GM12878 (cell line): ENCODE measurements at regions of chr14 and their contacts with region 1.

Region 1: GRCh38 chr14:25006961-25007795 is 42.8 kb downstream of the STXBP6 start:
- DNase-seq: no peak
- ATAC-seq: peak; percentile 70
- H3K4me3 ChIP-seq: no peak overlapping the region
- H3K27ac ChIP-seq: no peak overlapping the region
- H3K4me1 ChIP-seq: no peaks in the 10 kb centered on the region
- H3K27me3 ChIP-seq: no peaks in the 10 kb centered on the region
- CTCF ChIP-seq: no peak
- EP300 ChIP-seq: peak; percentile 56 to 84; a peak in 3 of 4 replicates
- POLR2A ChIP-seq: no peak
- RAD21 ChIP-seq: no peak

Region 2: DNA sequence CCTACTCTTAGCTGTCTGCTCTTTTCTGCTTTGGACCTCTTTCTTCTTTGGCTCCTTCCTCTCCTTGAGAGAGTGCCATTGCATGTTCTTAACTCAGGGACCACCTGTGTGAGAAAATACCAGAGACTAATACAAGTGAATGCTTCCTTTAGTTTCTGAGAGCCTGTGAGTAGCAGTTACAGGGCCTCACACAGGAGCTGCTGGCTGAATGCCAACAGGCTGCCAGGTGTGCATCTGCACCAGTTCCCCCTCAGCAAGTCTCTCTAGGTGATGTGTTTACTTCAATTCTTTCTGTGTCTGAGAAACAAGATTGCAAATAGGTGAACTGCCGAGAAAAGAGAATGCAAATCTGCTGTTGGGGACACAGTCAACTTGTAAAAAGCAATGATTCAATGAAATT is 65.5 kb before region 1 on chr14:
- CTCF ChIA-PET with region 1: no interaction called
- POLR2A ChIA-PET with region 1: no interaction called
- RAD21 ChIA-PET with region 1: interaction called, 4 read pairs
- SMC1A ChIA-PET with region 1: interaction called, 5 read pairs
- in situ Hi-C with region 1: no loop called
- intact Hi-C with region 1: loop called (anchors 1 kb)
- DNase-seq: no peak
- ATAC-seq: peak; percentile 36
- H3K4me3 ChIP-seq: no peak overlapping the region
- H3K27ac ChIP-seq: peak overlapping the region; percentile 30; the same call in 1 of the 2 replicates
- H3K4me1 ChIP-seq: no peaks in the 10 kb centered on the region; the same call in none of the 2 replicates
- H3K27me3 ChIP-seq: no peaks in the 10 kb centered on the region
- CTCF ChIP-seq: no peak
- EP300 ChIP-seq: no peak
- POLR2A ChIP-seq: no peak
- RAD21 ChIP-seq: no peak

Region 3: DNA sequence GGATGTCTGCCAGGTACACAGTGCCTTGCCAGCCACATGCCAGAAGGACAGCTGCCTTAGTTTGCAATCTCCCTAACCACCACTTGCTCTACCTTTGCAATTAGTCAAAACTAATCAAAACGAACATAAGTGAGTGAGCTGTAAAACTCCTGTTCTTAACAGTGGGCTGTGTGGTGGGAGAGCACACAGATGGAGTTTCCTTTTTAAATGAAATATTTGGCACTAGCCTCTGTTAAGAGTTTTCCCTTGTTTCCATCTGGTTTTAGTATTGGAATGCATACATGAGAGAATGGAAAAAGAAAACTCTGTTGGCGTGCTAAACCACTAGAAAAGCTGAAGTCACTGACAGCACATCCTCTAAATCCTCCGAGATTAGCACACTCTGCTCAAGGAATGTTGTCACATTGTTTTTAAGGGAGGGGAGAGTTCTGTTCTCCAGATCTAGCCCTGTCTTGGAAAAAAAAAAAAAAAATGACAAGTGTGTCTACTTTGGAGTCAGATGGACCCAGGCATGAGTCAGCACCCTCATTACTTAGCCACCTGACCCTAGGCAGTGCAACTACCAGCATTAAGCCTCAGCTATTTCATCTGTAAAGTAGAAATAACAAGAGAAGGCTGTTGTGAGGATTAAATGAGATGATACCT is 41.1 kb before region 1 on chr14:
- CTCF ChIA-PET with region 1: interaction called, 3 read pairs
- POLR2A ChIA-PET with region 1: interaction called, 3 read pairs
- RAD21 ChIA-PET with region 1: interaction called, 6 read pairs
- SMC1A ChIA-PET with region 1: interaction called, 10 read pairs
- in situ Hi-C with region 1: no loop called
- intact Hi-C with region 1: no loop called
- DNase-seq: no peak
- ATAC-seq: peak; percentile 69
- H3K4me3 ChIP-seq: no peak overlapping the region
- H3K27ac ChIP-seq: no peak overlapping the region
- H3K4me1 ChIP-seq: no peaks in the 10 kb centered on the region
- H3K27me3 ChIP-seq: no peaks in the 10 kb centered on the region
- CTCF ChIP-seq: no peak
- EP300 ChIP-seq: 0 out of 4 replicates have a peak, but pooled peaks of 1 of the 2 experiments have one; percentile 9
- POLR2A ChIP-seq: no peak
- RAD21 ChIP-seq: no peak

Region 4: GRCh38 chr14:24984846-24985589 is 22.2 kb before region 1 on chr14:
- CTCF ChIA-PET with region 1: interaction called, 11 read pairs
- POLR2A ChIA-PET with region 1: no interaction called
- RAD21 ChIA-PET with region 1: interaction called, 32 read pairs
- SMC1A ChIA-PET with region 1: interaction called, 118 read pairs
- in situ Hi-C with region 1: no loop called
- intact Hi-C with region 1: no loop called
- DNase-seq: no peak
- ATAC-seq: no peak
- H3K4me3 ChIP-seq: no peak overlapping the region
- H3K27ac ChIP-seq: no peak overlapping the region
- H3K4me1 ChIP-seq: no peaks in the 10 kb centered on the region
- H3K27me3 ChIP-seq: no peaks in the 10 kb centered on the region
- CTCF ChIP-seq: no peak
- EP300 ChIP-seq: no peak
- POLR2A ChIP-seq: no peak
- RAD21 ChIP-seq: no peak

Region 5: DNA sequence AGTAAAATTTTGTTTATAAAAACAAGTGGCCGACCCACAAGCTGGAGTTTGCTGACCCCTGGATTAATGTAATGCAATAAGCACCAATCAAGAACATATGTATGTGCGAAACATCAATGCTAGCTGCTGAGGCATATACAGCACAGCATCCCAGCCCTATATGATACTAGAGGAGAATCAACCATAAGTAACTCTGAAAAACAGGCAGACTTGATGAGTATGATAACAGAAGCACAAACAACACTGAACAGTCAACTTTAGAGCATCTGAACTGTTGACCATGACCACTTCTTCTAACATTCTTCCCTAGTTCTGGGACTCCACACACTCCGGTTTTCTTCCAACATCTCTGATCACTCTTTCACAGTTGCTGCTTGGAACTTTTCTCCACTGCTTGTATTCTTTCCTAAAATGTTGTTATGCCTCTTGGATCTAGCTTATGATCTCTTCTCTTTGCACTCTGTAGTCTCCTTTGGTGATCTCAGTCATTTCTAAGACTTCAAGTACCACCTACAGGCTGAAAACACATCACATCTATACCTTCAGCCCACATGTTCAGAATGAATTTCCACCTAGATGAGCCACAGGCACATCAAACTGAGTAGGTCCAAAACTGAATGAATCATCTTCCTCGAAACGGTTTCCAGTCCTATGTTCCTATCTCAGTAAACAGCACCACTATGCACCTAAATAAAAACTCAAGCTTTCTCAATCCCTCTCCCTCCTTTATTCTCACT is 14.4 kb before region 1 on chr14:
- CTCF ChIA-PET with region 1: interaction called, 12 read pairs
- POLR2A ChIA-PET with region 1: interaction called, 6 read pairs
- RAD21 ChIA-PET with region 1: interaction called, 5 read pairs
- SMC1A ChIA-PET with region 1: interaction called, 116 read pairs
- in situ Hi-C with region 1: no loop called
- intact Hi-C with region 1: no loop called
- DNase-seq: no peak
- ATAC-seq: peak; percentile 69
- H3K4me3 ChIP-seq: no peak overlapping the region
- H3K27ac ChIP-seq: no peak overlapping the region
- H3K4me1 ChIP-seq: no peaks in the 10 kb centered on the region; the same call in 1 of the 2 replicates
- H3K27me3 ChIP-seq: no peaks in the 10 kb centered on the region
- CTCF ChIP-seq: peak in 1 of 3 experiments; percentile 25; a peak in 1 of 6 replicates
- EP300 ChIP-seq: no peak
- POLR2A ChIP-seq: no peak
- RAD21 ChIP-seq: no peak

Region 6: DNA sequence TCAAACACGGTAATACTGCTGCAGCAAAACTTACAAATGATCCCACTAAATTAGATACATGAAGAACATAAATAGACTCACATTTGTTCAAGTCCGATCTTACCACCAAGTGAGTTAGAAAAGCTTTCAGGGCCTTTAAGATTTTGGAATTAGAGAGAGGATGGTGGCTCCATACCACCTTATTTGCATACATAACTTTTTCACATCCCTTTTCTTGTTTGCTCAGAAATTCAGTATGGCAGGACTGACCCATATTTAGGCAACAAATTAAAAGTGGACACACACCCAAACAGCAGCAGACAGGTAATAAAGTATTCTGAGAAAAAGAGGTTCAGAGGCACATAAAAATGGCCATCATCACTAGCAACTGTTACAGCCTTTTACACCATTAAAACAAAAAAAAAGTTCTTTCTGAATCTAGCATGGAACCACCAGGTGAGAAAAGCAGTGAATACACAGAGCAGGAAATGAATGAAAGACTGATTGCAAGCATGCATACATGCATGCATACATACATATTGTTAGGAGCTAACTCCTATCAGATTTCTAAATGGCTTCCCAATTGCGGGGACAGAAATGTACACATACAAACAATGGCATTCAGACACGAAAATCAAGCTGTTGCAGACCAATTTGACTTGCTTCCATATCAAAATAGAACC is 19.4 kb after region 1 on chr14:
- CTCF ChIA-PET with region 1: interaction called, 6 read pairs
- POLR2A ChIA-PET with region 1: interaction called, 8 read pairs
- RAD21 ChIA-PET with region 1: interaction called, 67 read pairs
- SMC1A ChIA-PET with region 1: interaction called, 172 read pairs
- in situ Hi-C with region 1: no loop called
- intact Hi-C with region 1: loop called (anchors 2 kb)
- DNase-seq: peak; percentile 15
- ATAC-seq: peak; percentile 84
- H3K4me3 ChIP-seq: no peak overlapping the region
- H3K27ac ChIP-seq: no peak overlapping the region
- H3K4me1 ChIP-seq: no peaks in the 10 kb centered on the region
- H3K27me3 ChIP-seq: no peaks in the 10 kb centered on the region
- CTCF ChIP-seq: no peak
- EP300 ChIP-seq: peak in 1 of 2 experiments; percentile 24; a peak in 2 of 4 replicates
- POLR2A ChIP-seq: no peak
- RAD21 ChIP-seq: no peak